Mammary epithelial cell (primary cell): ENCODE measurements at regions of chr11 and their contacts with region 1.

Region 1: DNA sequence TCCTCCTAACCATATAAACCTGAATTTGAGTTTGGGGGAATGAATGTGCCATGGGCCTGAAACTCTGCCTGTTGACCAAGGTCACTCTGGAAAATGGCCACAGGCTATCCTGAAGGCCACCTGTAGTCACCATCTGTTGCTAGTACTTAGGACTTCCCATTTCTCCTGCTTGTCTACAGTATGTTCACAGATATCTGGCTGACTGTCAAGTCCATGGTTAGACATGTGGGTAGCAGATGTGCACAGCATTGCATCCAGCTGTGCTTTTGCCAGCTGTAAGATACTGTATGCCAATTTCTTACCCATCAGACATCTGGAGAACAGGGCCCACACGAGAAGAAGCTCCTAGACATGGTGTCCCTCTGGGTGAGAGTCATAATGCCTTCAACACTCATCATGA is 475.4 kb downstream of the INSC start:
- DNase-seq: no peak
- H3K4me3 ChIP-seq: no peak overlapping the region
- H3K27ac ChIP-seq: no peak overlapping the region
- H3K4me1 ChIP-seq: no peaks in the 10 kb centered on the region
- H3K27me3 ChIP-seq: no peaks in the 10 kb centered on the region
- CTCF ChIP-seq: no peak

Region 2: DNA sequence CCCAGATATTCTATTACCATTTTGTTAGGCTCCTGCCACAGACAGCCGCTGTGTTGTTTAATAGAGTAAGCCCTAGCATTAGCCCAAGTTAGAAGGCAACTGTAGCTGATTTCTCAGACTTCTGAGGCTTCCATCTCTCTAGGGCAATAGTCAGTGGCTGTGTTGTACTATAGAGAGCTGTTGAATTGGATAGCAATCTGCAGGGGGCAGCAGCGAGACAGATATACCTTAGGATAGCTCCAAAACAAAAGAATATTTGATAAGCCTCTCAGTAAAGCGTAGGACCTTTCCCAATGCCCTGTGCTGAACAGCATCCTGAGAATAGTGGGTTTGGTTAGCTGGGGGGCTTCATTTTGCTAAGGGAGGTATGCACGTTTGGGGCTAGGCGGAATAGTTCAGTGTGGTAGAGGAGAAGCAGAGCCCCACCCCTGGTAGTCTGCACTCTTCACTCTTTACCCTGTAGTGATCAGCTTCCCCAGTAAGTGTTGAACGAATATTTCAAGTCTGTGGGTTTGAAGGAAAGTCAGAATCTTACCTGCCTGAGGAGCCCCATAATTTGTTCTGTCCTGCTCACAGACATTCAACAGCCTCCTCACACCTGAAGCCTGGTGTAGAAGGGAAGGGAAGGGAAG is 39.7 kb after region 1 on chr11:
- CTCF ChIA-PET with region 1: no interaction called
- dilution Hi-C with region 1: loop called (anchors 5 kb)
- in situ Hi-C with region 1: no loop called
- intact Hi-C with region 1: no loop called
- DNase-seq: peak; percentile 31
- H3K4me3 ChIP-seq: no peak overlapping the region
- H3K27ac ChIP-seq: no peak overlapping the region
- H3K4me1 ChIP-seq: no peaks in the 10 kb centered on the region
- H3K27me3 ChIP-seq: no peaks in the 10 kb centered on the region
- CTCF ChIP-seq: peak; percentile 23 to 47

Region 3: GRCh38 chr11:15650105-15650938 is 60.2 kb after region 1 on chr11:
- CTCF ChIA-PET with region 1: no interaction called
- dilution Hi-C with region 1: no loop called
- in situ Hi-C with region 1: no loop called
- intact Hi-C with region 1: no loop called
- DNase-seq: peak; percentile 88
- H3K4me3 ChIP-seq: peak overlapping the region; percentile 32 to 48 (median 35)
- H3K27ac ChIP-seq: peak overlapping the region; percentile 19
- H3K4me1 ChIP-seq: peaks cover 5% of the 10 kb centered on the region
- H3K27me3 ChIP-seq: no peaks in the 10 kb centered on the region
- CTCF ChIP-seq: peak; percentile 78 to 96